CD4-positive, alpha-beta T cell (primary cell): ENCODE measurements at regions of chr11 and their contacts with region 1.

Region 1: DNA sequence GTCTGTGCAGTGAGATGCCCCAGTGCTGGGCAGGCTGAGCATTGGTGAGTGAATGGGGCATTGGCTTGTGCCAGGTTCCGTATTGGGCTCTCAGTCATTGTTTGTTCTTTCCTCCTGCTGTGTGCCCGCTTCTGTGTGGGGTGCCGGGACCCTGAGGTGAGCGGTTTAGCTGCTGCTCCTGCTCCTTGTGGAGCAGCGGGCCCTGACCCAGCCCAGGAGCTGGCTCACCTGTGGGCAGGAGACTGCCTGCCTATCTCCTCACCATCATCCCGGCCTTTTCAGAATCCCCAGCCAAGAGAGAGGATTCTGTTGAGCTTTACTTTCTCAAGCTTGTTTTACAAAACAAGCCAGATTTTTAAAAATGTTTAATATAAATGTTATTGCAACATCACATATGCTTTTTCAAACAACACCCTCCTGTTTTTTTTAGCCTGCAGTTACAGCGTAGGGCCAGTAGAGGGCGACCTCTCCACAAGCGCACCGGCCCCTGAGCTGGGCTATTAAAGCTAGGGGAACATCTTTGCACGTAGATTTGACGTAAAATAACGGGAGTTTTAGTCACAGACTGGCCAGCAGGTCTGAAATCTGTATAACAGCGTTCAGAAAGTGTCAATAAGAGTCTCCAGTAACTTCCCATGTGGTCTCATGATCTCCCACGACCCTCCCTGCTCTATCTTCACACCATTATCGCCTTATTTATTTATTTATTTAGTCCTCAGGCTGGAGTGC is 25.1 kb upstream of the RELT start:
- DNase-seq: peak; percentile 36 to 87 (median 54)
- ATAC-seq: peak; percentile 94
- H3K4me3 ChIP-seq: no peak overlapping the region
- H3K4me3 Mint-ChIP-seq: no peak overlapping the region
- H3K27ac ChIP-seq: no peak overlapping the region
- H3K27ac Mint-ChIP-seq: no peak overlapping the region
- H3K4me1 ChIP-seq: peaks cover 3% of the 10 kb centered on the region
- H3K4me1 Mint-ChIP-seq: no peaks in the 10 kb centered on the region
- H3K27me3 ChIP-seq: no peaks in the 10 kb centered on the region
- H3K27me3 Mint-ChIP-seq: no peaks in the 10 kb centered on the region
- CTCF ChIP-seq: peak; percentile 98

Region 2: GRCh38 chr11:73001615-73002014 is 349.5 kb before region 1 on chr11:
- CTCF ChIA-PET with region 1: no interaction called
- POLR2A ChIA-PET with region 1: no interaction called
- intact Hi-C with region 1: no loop called
- DNase-seq: no peak
- ATAC-seq: no peak
- H3K4me3 ChIP-seq: no peak overlapping the region
- H3K4me3 Mint-ChIP-seq: no peak overlapping the region
- H3K27ac ChIP-seq: no peak overlapping the region
- H3K27ac Mint-ChIP-seq: no peak overlapping the region
- H3K4me1 ChIP-seq: no peaks in the 10 kb centered on the region
- H3K4me1 Mint-ChIP-seq: peaks cover 33% of the 10 kb centered on the region
- H3K27me3 ChIP-seq: no peaks in the 10 kb centered on the region
- H3K27me3 Mint-ChIP-seq: no peaks in the 10 kb centered on the region
- CTCF ChIP-seq: no peak

Region 3: GRCh38 chr11:73335204-73335923 is 15.7 kb before region 1 on chr11:
- CTCF ChIA-PET with region 1: interaction called, 15 read pairs
- POLR2A ChIA-PET with region 1: no interaction called
- intact Hi-C with region 1: no loop called
- DNase-seq: peak; percentile 58 to 85 (median 75)
- ATAC-seq: peak; percentile 90
- H3K4me3 ChIP-seq: no peak overlapping the region
- H3K4me3 Mint-ChIP-seq: no peak overlapping the region
- H3K27ac ChIP-seq: no peak overlapping the region
- H3K27ac Mint-ChIP-seq: no peak overlapping the region
- H3K4me1 ChIP-seq: peaks cover 3% of the 10 kb centered on the region
- H3K4me1 Mint-ChIP-seq: no peaks in the 10 kb centered on the region
- H3K27me3 ChIP-seq: no peaks in the 10 kb centered on the region
- H3K27me3 Mint-ChIP-seq: no peaks in the 10 kb centered on the region
- CTCF ChIP-seq: peak; percentile 98

Region 4: DNA sequence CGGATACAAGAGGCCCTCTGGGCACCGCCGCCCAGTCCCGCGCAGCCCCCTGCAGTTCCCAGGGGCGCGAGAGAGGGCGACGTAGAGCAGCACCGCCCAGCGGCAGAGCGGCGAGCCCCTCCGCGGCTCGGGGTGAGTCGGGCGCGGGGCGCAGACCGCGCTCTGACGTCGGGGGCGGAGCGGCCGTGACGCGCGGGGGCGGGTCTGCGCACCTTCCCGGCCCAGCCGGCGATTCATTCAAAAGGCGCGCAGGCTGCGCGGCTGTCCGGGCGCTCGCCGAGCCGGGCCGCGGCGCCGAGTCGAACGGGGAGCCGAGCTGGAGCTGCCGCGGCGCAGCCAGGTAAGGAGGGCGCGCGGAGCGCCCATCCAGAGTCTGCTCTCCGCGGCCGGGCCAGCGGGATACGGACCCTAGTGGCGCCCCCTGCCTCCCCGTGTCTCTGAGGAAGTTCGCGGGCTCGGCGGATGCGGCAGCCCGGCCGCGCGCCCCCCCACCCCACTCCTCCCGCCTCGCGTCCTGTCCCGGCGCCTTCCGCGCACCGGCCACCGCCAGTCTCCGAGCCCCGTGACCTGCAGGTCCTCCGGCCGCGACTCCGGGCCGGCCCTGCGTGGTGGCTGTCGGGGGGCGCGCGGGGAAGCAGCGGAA is 25.2 kb after region 1 on chr11 and contains the start of gene RELT:
- CTCF ChIA-PET with region 1: interaction called, 4 read pairs
- POLR2A ChIA-PET with region 1: interaction called, 6 read pairs
- intact Hi-C with region 1: loop called (anchors 1 kb)
- DNase-seq: peak; percentile 79 to 97 (median 93)
- ATAC-seq: peak; percentile 94
- H3K4me3 ChIP-seq: peak within 1 kb of the TSS; percentile 84
- H3K4me3 Mint-ChIP-seq: peak within 1 kb of the TSS; percentile 93
- H3K27ac ChIP-seq: peak within 1 kb of the TSS; percentile 78 to 91
- H3K27ac Mint-ChIP-seq: peak within 1 kb of the TSS; percentile 88
- H3K4me1 ChIP-seq: peaks cover 58% of the 10 kb centered on the region
- H3K4me1 Mint-ChIP-seq: peaks cover 42% of the 10 kb centered on the region
- H3K27me3 ChIP-seq: no peaks in the 10 kb centered on the region
- H3K27me3 Mint-ChIP-seq: no peaks in the 10 kb centered on the region
- CTCF ChIP-seq: peak; percentile 86
- total RNA-seq, gene RELT: 107 to 114 TPM

Region 5: DNA sequence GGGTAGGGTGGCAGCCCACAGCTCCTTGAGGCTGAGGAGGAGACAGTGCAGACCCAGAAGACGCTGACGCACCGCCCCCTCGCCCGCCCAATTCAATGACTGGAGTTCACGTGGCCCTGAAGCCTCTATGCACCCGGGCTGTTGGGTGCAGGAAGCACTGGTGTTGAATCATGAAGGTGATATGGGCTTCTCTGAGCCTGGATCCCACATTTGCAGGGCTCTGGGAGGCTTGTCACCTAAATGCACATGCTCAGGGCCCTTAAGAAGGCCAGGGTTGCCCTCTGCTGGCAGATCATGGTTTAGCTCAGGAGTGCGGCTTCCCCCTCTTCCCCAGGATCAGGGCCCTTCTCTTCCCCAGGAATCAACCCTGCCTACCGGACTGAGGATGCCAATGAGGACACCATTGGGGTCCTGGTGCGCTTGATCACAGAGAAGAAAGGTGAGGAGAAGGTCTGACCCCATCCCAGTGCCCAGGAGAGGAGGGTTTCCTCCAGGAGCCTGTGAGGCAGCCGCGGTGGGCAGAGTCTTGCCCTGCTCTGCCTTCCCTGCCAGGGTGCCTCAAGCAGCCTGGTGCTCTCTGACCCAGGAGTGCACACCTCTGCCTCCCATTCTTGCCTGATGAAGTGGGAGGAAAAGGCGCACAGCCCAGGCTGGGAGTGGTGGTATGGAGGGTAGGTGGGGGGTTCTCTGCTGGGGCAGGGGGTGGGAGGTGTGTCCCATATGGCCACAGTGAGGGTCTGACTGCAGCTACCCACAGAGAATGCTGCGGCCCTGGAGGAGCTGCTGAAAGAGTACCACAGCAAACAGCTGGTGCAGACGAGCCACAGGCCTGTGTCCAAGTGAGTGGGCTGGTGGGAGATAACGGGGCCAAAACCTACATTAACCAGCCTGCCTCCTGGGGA is 42.7 kb after region 1 on chr11:
- CTCF ChIA-PET with region 1: interaction called, 67 read pairs
- POLR2A ChIA-PET with region 1: interaction called, 8 read pairs
- intact Hi-C with region 1: loop called (anchors 1 kb)
- DNase-seq: peak; percentile 52 to 81 (median 62)
- ATAC-seq: peak; percentile 77
- H3K4me3 ChIP-seq: no peak overlapping the region
- H3K4me3 Mint-ChIP-seq: peak overlapping the region; percentile 30
- H3K27ac ChIP-seq: no peak overlapping the region
- H3K27ac Mint-ChIP-seq: peak overlapping the region; percentile 73
- H3K4me1 ChIP-seq: peaks cover 7% of the 10 kb centered on the region
- H3K4me1 Mint-ChIP-seq: peaks cover 4% of the 10 kb centered on the region
- H3K27me3 ChIP-seq: no peaks in the 10 kb centered on the region
- H3K27me3 Mint-ChIP-seq: no peaks in the 10 kb centered on the region
- CTCF ChIP-seq: peak; percentile 77

Region 6: GRCh38 chr11:73661035-73661628 is 310.1 kb after region 1 on chr11:
- CTCF ChIA-PET with region 1: interaction called, 18 read pairs
- POLR2A ChIA-PET with region 1: no interaction called
- intact Hi-C with region 1: loop called (anchors 1 kb)
- DNase-seq: peak; percentile 69 to 91 (median 83)
- ATAC-seq: peak; percentile 98
- H3K4me3 ChIP-seq: peak overlapping the region; percentile 34
- H3K4me3 Mint-ChIP-seq: no peak overlapping the region
- H3K27ac ChIP-seq: no peak overlapping the region
- H3K27ac Mint-ChIP-seq: no peak overlapping the region
- H3K4me1 ChIP-seq: peaks cover 21% of the 10 kb centered on the region
- H3K4me1 Mint-ChIP-seq: peaks cover 32% of the 10 kb centered on the region
- H3K27me3 ChIP-seq: no peaks in the 10 kb centered on the region
- H3K27me3 Mint-ChIP-seq: no peaks in the 10 kb centered on the region
- CTCF ChIP-seq: peak; percentile 96